Head of caudate nucleus (tissue), 42 donors: ENCODE measurements at regions of chr3 and their contacts with region 1.

Region 1: DNA sequence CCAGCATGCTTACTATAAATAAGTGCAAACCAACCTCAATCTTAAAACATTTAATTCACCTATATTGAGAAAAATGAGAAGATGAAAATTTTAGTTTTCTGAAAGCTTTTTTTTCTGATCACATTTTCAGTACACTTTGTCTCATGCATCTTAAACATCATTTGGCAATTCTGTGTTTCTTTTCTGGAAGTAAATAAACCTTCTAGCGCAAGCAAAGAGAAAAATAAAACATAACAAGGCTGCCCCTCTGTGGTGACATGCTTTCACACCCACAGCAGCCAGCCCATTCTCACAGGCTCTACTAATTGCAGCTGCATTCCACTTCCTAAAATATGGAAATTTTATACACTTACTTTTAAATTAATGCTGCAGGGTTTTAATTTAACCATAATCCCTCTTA is 90.1 kb downstream of the NEK10 start:
- DNase-seq: peak in 23 of 42 donors; percentile 3 to 57 (median 18)

Region 2: DNA sequence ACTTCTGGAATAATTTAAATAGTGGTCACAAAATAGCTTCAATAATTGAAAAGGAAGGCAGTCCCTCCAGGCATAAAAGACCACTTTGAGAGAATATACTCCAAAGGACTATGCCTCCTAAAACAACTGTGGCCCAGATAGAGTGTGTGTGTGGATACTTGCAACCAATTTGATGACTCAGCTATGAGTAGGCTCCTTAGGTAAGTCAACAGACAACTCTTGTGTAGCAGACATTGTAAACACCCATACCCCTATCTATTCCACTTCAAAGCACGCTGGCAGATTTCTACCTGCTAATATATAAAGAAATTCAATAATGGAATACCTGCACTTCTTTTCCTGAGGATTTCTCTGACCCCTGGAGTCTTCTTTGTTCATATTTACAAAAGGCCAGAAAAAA is 164.4 kb before region 1 on chr3:
- intact Hi-C with region 1: no loop called
- DNase-seq: no peak

Region 3: DNA sequence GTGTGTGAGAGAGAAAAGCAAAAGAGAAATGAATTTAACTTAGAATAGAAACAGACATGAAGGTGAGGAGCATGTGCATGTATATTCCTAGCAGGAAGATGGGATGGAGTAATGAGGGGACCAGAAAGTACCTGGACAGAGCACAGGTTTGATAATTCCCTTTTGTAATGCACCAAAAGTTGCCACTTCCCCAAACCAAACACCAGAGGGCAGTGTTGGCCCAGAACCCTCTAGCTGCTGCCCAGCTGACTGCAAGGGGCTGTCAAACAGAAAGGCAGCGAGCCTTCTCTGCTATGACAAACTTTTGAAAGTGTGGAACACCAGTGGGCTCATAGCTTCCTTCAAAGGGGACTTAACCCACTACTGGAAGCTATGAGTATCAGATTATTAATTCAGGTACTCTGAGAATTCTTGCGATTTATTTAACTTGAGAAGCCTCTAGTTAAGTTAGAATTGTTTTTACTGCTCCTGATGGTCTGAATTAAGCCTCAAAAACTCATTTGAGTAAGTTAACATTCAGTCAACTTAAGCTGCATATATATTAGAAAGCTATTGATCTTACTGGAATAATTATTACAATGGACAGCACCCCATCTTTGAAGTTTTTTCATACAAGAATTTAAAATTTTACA is 144.8 kb before region 1 on chr3:
- intact Hi-C with region 1: loop called (anchors 5 kb)
- DNase-seq: peak; percentile 20 to 88 (median 73)